Activated CD8-positive, alpha-beta memory T cell treated with anti-CD3 and anti-CD28 coated beads, Interleukin-2, amount 10 ng/mL, durations not matched to agents 7 days and 5 days (primary cell): ENCODE measurements at regions of chr9 and their contacts with region 1.

Region 1: GRCh38 chr9:123349691-123350480 is 6.1 kb upstream of the CRB2 start:
- DNase-seq: peak; percentile 74
- ATAC-seq: peak; percentile 81
- H3K4me3 Mint-ChIP-seq: no peak overlapping the region
- H3K27ac Mint-ChIP-seq: no peak overlapping the region
- H3K4me1 Mint-ChIP-seq: peaks cover 3% of the 10 kb centered on the region
- H3K27me3 Mint-ChIP-seq: peaks cover 12% of the 10 kb centered on the region

Region 2: GRCh38 chr9:122991370-122991830 is 358.5 kb before region 1 on chr9:
- CTCF ChIA-PET with region 1: interaction called, 18 read pairs
- DNase-seq: peak; percentile 51
- ATAC-seq: peak; percentile 86
- H3K4me3 Mint-ChIP-seq: no peak overlapping the region
- H3K27ac Mint-ChIP-seq: no peak overlapping the region
- H3K4me1 Mint-ChIP-seq: peaks cover 7% of the 10 kb centered on the region
- H3K27me3 Mint-ChIP-seq: no peaks in the 10 kb centered on the region

Region 3: GRCh38 chr9:123081824-123082223 is 268.1 kb before region 1 on chr9:
- CTCF ChIA-PET with region 1: interaction called, 40 read pairs
- DNase-seq: no peak
- ATAC-seq: no peak
- H3K4me3 Mint-ChIP-seq: no peak overlapping the region
- H3K27ac Mint-ChIP-seq: no peak overlapping the region
- H3K4me1 Mint-ChIP-seq: peaks cover 4% of the 10 kb centered on the region
- H3K27me3 Mint-ChIP-seq: no peaks in the 10 kb centered on the region

Region 4: DNA sequence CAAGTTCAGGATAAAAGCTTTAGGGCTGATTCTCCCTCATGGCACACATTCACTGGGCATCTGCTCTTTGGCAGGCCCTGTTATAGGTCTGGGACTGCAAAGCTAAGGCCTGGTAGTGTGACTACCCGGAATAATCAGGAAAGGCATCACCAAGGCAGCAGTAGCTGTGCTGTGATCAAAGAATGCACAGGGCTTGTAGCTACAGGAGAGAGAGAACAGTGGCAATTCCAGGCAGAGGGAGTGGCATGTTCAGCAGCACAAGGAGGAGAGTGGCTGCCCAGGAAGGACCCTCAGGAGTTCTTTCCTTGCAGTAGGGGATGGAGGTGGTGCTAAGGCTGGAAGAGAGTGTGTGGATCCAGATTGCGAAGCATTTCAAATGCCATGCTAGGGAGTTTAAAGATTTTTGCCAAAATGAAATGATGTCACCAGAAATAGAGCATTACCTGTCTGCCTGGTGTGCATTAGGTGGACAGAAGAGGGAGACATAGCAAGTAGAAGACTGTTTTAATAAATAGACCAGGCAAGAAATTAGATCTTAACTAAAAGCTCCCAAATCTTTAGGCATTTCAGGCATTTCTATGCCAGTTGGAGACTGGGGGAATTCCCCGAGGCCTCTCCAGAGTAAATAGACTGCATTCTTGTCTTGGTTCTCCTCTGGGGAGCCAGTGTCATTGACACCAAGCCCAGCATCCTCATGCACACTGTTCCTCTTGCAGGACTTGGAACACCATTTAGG is 247.3 kb before region 1 on chr9:
- CTCF ChIA-PET with region 1: interaction called, 20 read pairs
- DNase-seq: no peak
- ATAC-seq: no peak
- H3K4me3 Mint-ChIP-seq: no peak overlapping the region
- H3K27ac Mint-ChIP-seq: no peak overlapping the region
- H3K4me1 Mint-ChIP-seq: no peaks in the 10 kb centered on the region
- H3K27me3 Mint-ChIP-seq: no peaks in the 10 kb centered on the region

Region 5: DNA sequence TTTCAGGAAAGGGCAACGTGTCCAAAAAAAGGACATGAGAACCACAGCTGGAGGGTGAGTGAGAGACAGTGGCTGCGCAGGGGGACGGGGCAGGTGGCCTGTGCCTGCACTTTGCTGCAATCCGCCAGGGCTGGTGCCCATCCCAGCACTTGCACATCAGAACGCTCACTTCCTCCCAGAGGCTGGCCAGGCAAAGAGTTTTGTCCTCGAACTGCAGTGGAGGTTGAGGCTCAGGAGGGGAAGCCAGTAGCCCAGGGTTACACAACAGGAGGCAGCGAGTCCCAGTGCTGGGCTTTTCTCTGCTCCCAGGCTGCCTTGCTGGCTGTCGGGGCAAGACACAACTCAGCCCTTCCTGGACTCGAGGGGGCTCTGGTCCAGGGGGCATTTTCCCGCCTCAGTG is 39.2 kb after region 1 on chr9:
- CTCF ChIA-PET with region 1: interaction called, 55 read pairs
- DNase-seq: no peak
- ATAC-seq: no peak
- H3K4me3 Mint-ChIP-seq: no peak overlapping the region
- H3K27ac Mint-ChIP-seq: no peak overlapping the region
- H3K4me1 Mint-ChIP-seq: no peaks in the 10 kb centered on the region
- H3K27me3 Mint-ChIP-seq: no peaks in the 10 kb centered on the region